Mammary epithelial cell (primary cell): ENCODE measurements at regions of chr9 and their contacts with region 1.

Region 1: GRCh38 chr9:121213136-121213806 is 11.6 kb upstream of the RAB14 start:
- DNase-seq: peak; percentile 81
- H3K4me3 ChIP-seq: no peak overlapping the region
- H3K27ac ChIP-seq: no peak overlapping the region
- H3K4me1 ChIP-seq: peaks cover 10% of the 10 kb centered on the region
- H3K27me3 ChIP-seq: no peaks in the 10 kb centered on the region
- CTCF ChIP-seq: peak; percentile 97 to 99

Region 2: GRCh38 chr9:121107041-121107440 is 106.2 kb before region 1 on chr9:
- CTCF ChIA-PET with region 1: no interaction called
- dilution Hi-C with region 1: no loop called
- in situ Hi-C with region 1: no loop called
- intact Hi-C with region 1: loop called (anchors 1 kb)
- DNase-seq: peak; percentile 39
- H3K4me3 ChIP-seq: no peak overlapping the region
- H3K27ac ChIP-seq: no peak overlapping the region
- H3K4me1 ChIP-seq: no peaks in the 10 kb centered on the region
- H3K27me3 ChIP-seq: no peaks in the 10 kb centered on the region
- CTCF ChIP-seq: peak; percentile 46 to 69

Region 3: DNA sequence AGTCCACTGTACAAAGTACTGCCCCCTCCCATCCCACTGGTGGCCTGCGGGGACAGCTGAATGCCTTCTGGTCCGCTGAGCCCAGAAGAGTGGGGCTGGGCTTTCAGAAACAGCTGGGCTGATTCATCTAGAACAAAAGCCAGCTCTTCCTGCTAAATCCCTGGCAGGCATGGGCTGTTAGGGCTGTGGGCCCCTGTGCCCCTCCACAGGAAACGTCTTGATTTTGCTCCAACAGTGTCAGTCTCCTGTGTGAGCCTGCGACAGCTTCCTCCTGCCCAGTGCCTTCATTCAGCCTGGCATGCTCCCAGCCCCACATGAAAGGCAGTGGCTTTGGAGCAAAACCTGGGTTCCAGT is 47.8 kb after region 1 on chr9:
- CTCF ChIA-PET with region 1: no interaction called
- dilution Hi-C with region 1: no loop called
- in situ Hi-C with region 1: no loop called
- intact Hi-C with region 1: no loop called
- DNase-seq: no peak
- H3K4me3 ChIP-seq: no peak overlapping the region
- H3K27ac ChIP-seq: no peak overlapping the region
- H3K4me1 ChIP-seq: peaks cover 8% of the 10 kb centered on the region
- H3K27me3 ChIP-seq: no peaks in the 10 kb centered on the region
- CTCF ChIP-seq: no peak

Region 4: DNA sequence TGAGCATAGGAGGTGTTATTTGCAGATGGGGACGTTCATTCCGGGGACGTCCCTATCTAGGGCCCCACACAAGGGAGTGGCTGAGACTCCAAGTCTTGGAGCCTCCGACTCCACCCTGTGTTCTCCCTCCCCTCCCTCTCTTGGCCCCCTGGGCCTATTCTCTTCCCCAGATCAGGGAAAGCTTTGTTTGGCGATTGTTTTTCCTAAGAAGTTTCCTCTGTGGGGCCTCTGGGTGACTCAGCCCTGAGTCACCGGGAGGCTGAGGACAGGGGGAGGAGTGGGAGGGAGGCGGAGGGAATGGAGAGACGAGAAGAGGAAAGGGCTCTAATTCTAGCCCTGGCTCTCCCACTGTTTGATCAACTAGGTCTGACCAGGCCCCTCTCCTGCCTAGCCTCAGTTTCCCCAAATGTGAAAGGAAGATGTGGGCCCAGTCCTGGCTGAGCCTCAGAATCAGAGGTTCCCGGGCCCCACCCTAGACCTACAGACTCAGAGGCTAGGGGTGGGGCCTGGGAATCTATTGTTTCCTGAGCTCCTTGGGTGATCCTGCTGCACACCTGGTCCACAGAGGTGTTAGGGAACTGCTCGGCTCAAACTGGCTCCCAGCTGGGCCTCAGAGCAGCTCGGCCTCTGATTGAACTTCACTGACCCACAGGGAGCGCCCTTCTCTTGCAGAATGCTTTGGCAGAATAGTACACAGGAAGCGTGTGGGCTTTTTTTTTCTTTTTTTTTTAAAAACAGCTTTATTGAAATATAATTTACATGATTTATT is 73.9 kb after region 1 on chr9:
- CTCF ChIA-PET with region 1: no interaction called
- dilution Hi-C with region 1: no loop called
- in situ Hi-C with region 1: loop called in 1 of 2 experiments (anchors 10 kb)
- intact Hi-C with region 1: loop called (anchors 1 kb)
- DNase-seq: peak; percentile 99
- H3K4me3 ChIP-seq: peak overlapping the region in 1 of 3 experiments; percentile 32
- H3K27ac ChIP-seq: peak overlapping the region; percentile 100
- H3K4me1 ChIP-seq: peaks cover 63% of the 10 kb centered on the region
- H3K27me3 ChIP-seq: no peaks in the 10 kb centered on the region
- CTCF ChIP-seq: peak; percentile 17 to 46

Region 5: GRCh38 chr9:121369595-121370265 is 156.5 kb after region 1 on chr9 and contains the start of gene STOM:
- CTCF ChIA-PET with region 1: no interaction called
- dilution Hi-C with region 1: no loop called
- in situ Hi-C with region 1: loop called in 1 of 2 experiments (anchors 10 kb)
- intact Hi-C with region 1: loop called (anchors 1 kb)
- DNase-seq: peak; percentile 76
- H3K4me3 ChIP-seq: peak within 1 kb of the TSS; percentile 38 to 73 (median 62)
- H3K27ac ChIP-seq: peak within 1 kb of the TSS; percentile 35
- H3K4me1 ChIP-seq: peaks cover 33% of the 10 kb centered on the region
- H3K27me3 ChIP-seq: no peaks in the 10 kb centered on the region
- CTCF ChIP-seq: no peak
- total RNA-seq, gene STOM: 80.3 to 124 TPM

Region 6: GRCh38 chr9:121498150-121498486 is 284.8 kb after region 1 on chr9:
- CTCF ChIA-PET with region 1: no interaction called
- dilution Hi-C with region 1: no loop called
- in situ Hi-C with region 1: no loop called
- intact Hi-C with region 1: loop called (anchors 5 kb)
- DNase-seq: peak; percentile 70
- H3K4me3 ChIP-seq: peak overlapping the region in 1 of 3 experiments; percentile 21
- H3K27ac ChIP-seq: no peak overlapping the region
- H3K4me1 ChIP-seq: peaks cover 21% of the 10 kb centered on the region
- H3K27me3 ChIP-seq: no peaks in the 10 kb centered on the region
- CTCF ChIP-seq: peak; percentile 74 to 76